ENCODE measurements at regions of chrX and their contacts with region 1.

Region 1: GRCh38 chrX:69280933-69281332 is 115.7 kb upstream of the PJA1 start:
- DNase-seq: peak in 1 of 2 donors; percentile 37
- ATAC-seq: peak in 6 of 8 donors; percentile 29 to 77 (median 64)
- H3K4me3 ChIP-seq: no peak overlapping the region
- H3K27ac ChIP-seq: peak overlapping the region in 3 of 10 donors; percentile 28 to 52 (median 35)
- H3K4me1 ChIP-seq: peaks cover 0 to 17% (median 3%) of the 10 kb centered on the region in 9 donors
- H3K27me3 ChIP-seq: peaks cover 0 to 37% (median 0%) of the 10 kb centered on the region in 7 donors
- CTCF ChIP-seq: no peak

Region 2: DNA sequence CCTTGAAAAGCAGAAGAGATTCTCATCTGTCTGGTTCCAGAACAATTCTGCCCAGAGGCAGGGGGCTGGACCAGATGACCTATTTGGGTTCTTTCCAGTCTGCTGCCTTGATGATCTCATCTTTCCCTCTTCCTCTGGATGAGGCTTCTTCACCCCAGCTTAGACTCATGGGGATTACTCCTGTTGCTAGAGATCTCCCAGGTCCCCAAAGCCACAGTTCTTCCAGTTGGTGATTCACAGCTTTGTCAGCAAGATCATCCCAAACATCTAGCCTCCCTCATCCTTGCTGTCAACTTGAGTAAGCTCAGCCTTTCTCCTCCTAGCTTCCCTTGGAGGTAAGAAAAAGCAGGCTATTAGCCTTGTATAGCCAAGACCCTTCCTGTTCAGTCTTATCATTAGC is 51.5 kb before region 1 on chrX:
- intact Hi-C with region 1: loop called in 6 of 10 experiments (anchors 5 to 10 kb)
- DNase-seq: no peak
- ATAC-seq: no peak
- H3K4me3 ChIP-seq: no peak overlapping the region
- H3K27ac ChIP-seq: no peak overlapping the region
- H3K4me1 ChIP-seq: no peaks in the 10 kb centered on the region
- H3K27me3 ChIP-seq: peaks cover 0 to 11% (median 0%) of the 10 kb centered on the region in 7 donors
- CTCF ChIP-seq: no peak

Region 3: GRCh38 chrX:69674891-69675290 is 394.0 kb after region 1 on chrX:
- intact Hi-C with region 1: no loop called
- DNase-seq: no peak
- ATAC-seq: no peak
- H3K4me3 ChIP-seq: no peak overlapping the region
- H3K27ac ChIP-seq: no peak overlapping the region
- H3K4me1 ChIP-seq: no peaks in the 10 kb centered on the region
- H3K27me3 ChIP-seq: no peaks in the 10 kb centered on the region
- CTCF ChIP-seq: no peak

Region 4: GRCh38 chrX:71032516-71032915 is 1751.6 kb after region 1 on chrX:
- intact Hi-C with region 1: no loop called
- DNase-seq: no peak
- ATAC-seq: no peak
- H3K4me3 ChIP-seq: no peak overlapping the region
- H3K27ac ChIP-seq: no peak overlapping the region
- H3K4me1 ChIP-seq: no peaks in the 10 kb centered on the region
- H3K27me3 ChIP-seq: peaks cover 0 to 38% (median 0%) of the 10 kb centered on the region in 7 donors
- CTCF ChIP-seq: peak in 1 of 9 donors; percentile 27